Aorta (tissue), 5 donors: ENCODE measurements at regions of chr6 and their contacts with region 1.

Region 1: DNA sequence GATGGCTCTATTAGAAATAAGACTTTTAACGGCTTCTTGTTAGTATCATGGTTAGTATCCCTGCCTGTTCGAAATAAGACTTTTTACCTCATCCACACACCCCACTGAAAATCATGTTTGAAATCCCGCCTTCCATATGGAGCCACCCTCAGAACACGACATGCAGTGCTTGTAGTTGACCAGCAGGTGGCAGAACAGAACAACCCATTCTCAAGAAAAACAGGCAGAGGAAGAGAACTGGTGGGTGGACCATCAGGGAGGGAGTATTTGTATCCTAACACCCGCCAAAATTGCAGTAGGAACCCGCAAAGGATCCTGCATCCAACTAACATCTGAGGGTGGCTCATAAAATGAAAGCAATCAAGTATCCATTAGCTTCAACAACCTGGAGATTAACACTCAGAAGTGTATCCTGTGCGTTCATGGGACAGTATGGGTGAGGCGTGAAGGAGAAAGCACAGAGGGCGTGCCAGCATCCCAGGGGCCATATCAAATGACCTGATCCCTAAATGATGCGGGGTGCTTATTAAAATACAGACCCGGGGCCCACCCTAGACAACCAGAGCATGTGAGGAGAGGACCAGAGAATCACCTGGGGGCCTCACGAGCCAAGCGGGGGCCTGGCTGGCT is 89.6 kb upstream of the NHSL1 start:
- DNase-seq: no peak
- ATAC-seq: peak; percentile 85
- H3K4me3 ChIP-seq: no peak overlapping the region
- H3K27ac ChIP-seq: no peak overlapping the region
- H3K4me1 ChIP-seq: no peaks in the 10 kb centered on the region
- H3K27me3 ChIP-seq: no peaks in the 10 kb centered on the region

Region 2: GRCh38 chr6:138765896-138766655 is 177.2 kb after region 1 on chr6:
- intact Hi-C with region 1: loop called (anchors 2 to 5 kb)
- DNase-seq: no peak
- ATAC-seq: no peak
- H3K4me3 ChIP-seq: no peak overlapping the region
- H3K27ac ChIP-seq: no peak overlapping the region
- H3K4me1 ChIP-seq: no peaks in the 10 kb centered on the region
- H3K27me3 ChIP-seq: no peaks in the 10 kb centered on the region